MCF 10A (cell line): ENCODE measurements at regions of chr13 and their contacts with region 1.

Region 1: DNA sequence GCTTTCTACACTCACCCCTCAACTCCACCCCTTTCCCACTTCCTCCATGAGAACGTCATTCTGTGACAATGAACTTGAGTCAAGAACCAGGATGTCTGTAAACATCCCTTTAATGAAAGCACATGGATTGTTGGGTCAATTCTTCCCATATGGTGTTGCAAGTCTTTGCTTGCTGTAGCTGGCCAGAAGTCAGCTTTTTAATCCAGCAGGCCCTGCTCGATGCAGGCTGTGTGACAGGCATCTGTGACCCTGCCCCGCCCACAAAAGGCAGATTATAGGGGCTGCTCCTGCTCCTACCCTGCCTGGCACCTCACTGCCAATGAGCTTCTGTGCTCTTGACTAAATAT is 78.0 kb downstream of the STARD13 start:
- DNase-seq: peak; percentile 81
- H3K4me3 Mint-ChIP-seq: peak overlapping the region; percentile 41
- H3K27ac Mint-ChIP-seq: peak overlapping the region; percentile 91
- H3K4me1 Mint-ChIP-seq: peaks cover 42% of the 10 kb centered on the region
- H3K27me3 Mint-ChIP-seq: no peaks in the 10 kb centered on the region
- CTCF ChIP-seq: no peak

Region 2: GRCh38 chr13:33125821-33126570 is 81.6 kb before region 1 on chr13:
- CTCF ChIA-PET with region 1: no interaction called
- POLR2A ChIA-PET with region 1: interaction called, 17 read pairs
- intact Hi-C with region 1: no loop called
- DNase-seq: peak; percentile 94
- H3K4me3 Mint-ChIP-seq: peak overlapping the region; percentile 4
- H3K27ac Mint-ChIP-seq: peak overlapping the region; percentile 79
- H3K4me1 Mint-ChIP-seq: peaks cover 26% of the 10 kb centered on the region
- H3K27me3 Mint-ChIP-seq: no peaks in the 10 kb centered on the region
- CTCF ChIP-seq: no peak

Region 3: DNA sequence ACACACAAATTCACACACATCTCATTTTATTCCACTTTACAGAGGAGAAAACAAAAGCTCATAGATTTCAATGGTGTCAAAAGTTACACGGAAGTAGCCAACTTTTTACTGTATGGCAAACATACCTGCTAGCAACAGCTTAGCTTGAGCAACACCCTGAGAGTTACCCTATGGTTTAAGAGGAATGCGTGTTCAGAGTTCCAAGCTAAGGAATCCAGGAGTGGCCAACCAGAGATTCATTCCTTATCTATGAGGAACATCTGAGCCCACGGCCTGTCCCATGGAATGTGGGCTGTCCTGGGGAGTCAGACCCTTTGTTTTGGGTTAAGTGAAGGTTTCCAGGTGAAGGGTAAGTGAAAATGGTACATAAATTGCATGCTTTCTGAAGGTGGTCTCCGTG is 10.4 kb after region 1 on chr13:
- CTCF ChIA-PET with region 1: interaction called, 8 read pairs
- POLR2A ChIA-PET with region 1: interaction called, 22 read pairs
- intact Hi-C with region 1: no loop called
- DNase-seq: peak; percentile 62
- H3K4me3 Mint-ChIP-seq: peak overlapping the region; percentile 37
- H3K27ac Mint-ChIP-seq: peak overlapping the region; percentile 94
- H3K4me1 Mint-ChIP-seq: peaks cover 67% of the 10 kb centered on the region
- H3K27me3 Mint-ChIP-seq: no peaks in the 10 kb centered on the region
- CTCF ChIP-seq: no peak